Left ventricle myocardium inferior (tissue), 1 donor: ENCODE measurements at regions of chr6 and their contacts with region 1.

Region 1: GRCh38 chr6:28940858-28941680 is 17.3 kb upstream of the TRIM27 start:
- DNase-seq: peak; percentile 50
- H3K4me3 ChIP-seq: peak overlapping the region; percentile 75
- H3K27ac ChIP-seq: peak overlapping the region; percentile 80
- H3K4me1 ChIP-seq: peaks cover 43% of the 10 kb centered on the region
- H3K27me3 ChIP-seq: no peaks in the 10 kb centered on the region
- CTCF ChIP-seq: no peak

Region 2: DNA sequence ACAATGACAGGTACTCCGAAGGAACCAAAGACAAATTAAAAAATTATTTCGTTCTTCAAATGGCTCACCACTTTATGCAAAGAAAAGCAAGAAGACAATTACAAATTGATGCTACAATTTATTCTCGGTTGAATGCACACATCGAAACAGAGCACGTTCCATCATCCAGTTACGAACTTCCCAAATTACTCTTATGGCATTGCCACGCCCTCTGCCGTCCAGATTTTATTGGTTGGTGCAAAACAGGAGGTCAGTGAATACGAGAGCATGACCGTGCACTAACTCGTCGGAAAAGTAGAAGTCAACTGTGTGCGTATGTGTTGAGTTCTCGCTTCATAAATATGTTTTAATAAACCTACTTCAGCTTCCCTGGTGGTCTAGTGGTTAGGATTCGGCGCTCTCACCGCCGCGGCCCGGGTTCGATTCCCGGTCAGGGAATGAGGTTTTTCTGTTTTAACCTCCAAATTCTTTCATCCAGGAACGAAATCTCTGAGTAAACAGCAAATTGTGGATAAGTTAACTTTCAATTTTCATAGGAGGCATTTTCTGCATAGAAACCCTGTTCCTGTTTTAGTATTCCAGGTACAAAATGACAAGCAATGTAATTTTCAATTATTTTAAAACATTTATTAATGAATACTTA is 40.9 kb after region 1 on chr6:
- intact Hi-C with region 1: loop called (anchors 5 kb)
- DNase-seq: peak; percentile 66
- H3K4me3 ChIP-seq: peak overlapping the region; percentile 75
- H3K27ac ChIP-seq: peak overlapping the region; percentile 79
- H3K4me1 ChIP-seq: peaks cover 30% of the 10 kb centered on the region
- H3K27me3 ChIP-seq: peaks cover 21% of the 10 kb centered on the region
- CTCF ChIP-seq: no peak

Region 3: GRCh38 chr6:29016559-29017427 is 75.7 kb after region 1 on chr6:
- intact Hi-C with region 1: no loop called
- DNase-seq: peak; percentile 63
- H3K4me3 ChIP-seq: peak overlapping the region; percentile 69
- H3K27ac ChIP-seq: no peak overlapping the region
- H3K4me1 ChIP-seq: peaks cover 10% of the 10 kb centered on the region
- H3K27me3 ChIP-seq: peaks cover 77% of the 10 kb centered on the region
- CTCF ChIP-seq: peak; percentile 86